ENCODE measurements at regions of chr9 and their contacts with region 1.

Region 1: GRCh38 chr9:33225319-33226149 is 14.4 kb upstream of the SPINK4 start:
- DNase-seq: peak in 3 of 5 donors; percentile 50 to 52 (median 51)
- ATAC-seq: peak in 2 of 4 donors; percentile 43 to 54
- H3K4me3 ChIP-seq: no peak overlapping the region
- H3K27ac ChIP-seq: peak overlapping the region in 1 of 12 donors; percentile 42
- H3K4me1 ChIP-seq: peaks cover 0 to 30% (median 3%) of the 10 kb centered on the region in 12 donors
- H3K27me3 ChIP-seq: no peaks in the 10 kb centered on the region
- CTCF ChIP-seq: peak; percentile 66 to 87 (median 82)
- POLR2A ChIP-seq: no peak

Region 2: DNA sequence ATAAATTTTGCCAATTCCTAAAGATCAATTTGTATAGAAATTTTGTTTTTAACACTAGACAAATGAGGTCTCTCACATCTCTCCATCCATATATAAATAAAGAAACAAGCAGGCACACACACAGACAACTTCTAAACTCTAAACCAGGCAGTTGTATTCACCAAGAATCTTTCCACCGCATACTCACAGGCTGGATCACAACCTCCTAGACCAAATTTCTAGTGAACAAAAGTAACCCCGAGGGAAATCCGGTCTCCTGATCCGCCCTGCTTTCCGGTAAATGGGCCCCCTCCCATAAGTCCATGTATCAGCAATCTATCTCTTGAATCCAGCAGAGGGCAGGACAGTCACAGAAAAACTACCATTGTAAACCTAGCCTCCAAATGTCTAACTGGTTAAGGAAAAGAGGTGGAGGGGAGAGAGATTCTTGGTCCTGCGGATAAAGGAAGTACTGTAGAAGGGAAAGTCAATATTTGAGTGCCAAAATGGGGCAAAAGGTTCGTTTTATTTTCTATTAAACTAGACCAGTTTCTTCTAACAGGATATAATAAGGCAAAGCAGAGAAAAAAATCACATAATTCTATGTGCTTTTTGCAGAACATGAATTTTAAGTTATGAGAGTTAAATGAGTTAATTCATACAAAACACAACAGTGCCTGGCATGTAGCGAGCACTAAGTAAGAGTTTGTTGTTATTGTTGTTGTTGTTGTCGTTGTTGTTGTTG is 144.2 kb before region 1 on chr9:
- intact Hi-C with region 1: loop called (anchors 1 to 2 kb)
- DNase-seq: peak in 4 of 5 donors; percentile 58 to 75 (median 64)
- ATAC-seq: peak in 3 of 4 donors; percentile 62 to 68 (median 62)
- H3K4me3 ChIP-seq: peak overlapping the region in 2 of 12 donors; percentile 11 to 37
- H3K27ac ChIP-seq: peak overlapping the region in 9 of 12 donors; percentile 9 to 81 (median 44)
- H3K4me1 ChIP-seq: peaks cover 0 to 29% (median 7%) of the 10 kb centered on the region in 12 donors
- H3K27me3 ChIP-seq: no peaks in the 10 kb centered on the region
- CTCF ChIP-seq: peak; percentile 60 to 85 (median 78)
- POLR2A ChIP-seq: no peak

Region 3: DNA sequence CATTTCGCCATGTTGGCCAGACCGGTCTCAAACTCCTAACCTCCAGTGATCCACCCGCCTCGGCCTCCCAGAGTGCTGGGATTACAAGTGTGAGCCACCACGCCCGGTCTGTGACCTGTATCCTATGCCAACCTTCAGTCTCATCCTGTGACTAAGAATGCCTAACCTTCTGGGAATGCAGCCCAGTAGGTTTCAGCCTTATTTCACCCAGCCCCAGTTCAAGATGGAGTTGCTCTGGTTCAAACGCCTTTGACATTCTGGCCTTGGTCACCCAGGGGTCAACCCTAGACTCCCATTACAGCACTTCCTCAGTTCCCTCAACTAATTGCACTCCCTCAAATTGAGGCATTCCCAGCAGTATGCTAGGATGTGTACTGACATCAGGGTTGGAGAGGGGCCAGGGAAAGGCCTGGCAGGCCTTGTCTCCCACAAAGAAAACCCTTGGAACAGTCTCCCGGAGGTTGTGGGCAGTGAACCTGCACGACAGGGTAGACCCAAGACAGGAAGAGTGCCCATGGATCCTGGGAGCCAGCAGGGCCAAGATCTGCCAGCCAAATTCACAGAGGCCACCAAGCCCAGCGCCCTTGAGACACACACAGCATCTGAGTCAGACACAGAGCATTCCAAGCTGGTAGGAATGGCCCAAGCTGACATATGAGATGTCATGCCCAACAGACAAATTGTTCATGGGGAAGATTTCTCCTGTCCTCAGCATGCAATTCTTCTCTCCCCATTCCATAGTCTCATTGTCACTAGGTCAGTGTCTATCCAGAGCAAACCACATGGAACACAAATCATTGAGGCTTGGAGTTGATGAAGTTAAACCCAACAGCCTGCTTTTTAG is 124.2 kb before region 1 on chr9:
- intact Hi-C with region 1: loop called in 2 of 10 experiments (anchors 5 kb)
- DNase-seq: no peak
- ATAC-seq: peak in 3 of 4 donors; percentile 21 to 58 (median 55)
- H3K4me3 ChIP-seq: no peak overlapping the region
- H3K27ac ChIP-seq: peak overlapping the region in 5 of 12 donors; percentile 8 to 27 (median 18)
- H3K4me1 ChIP-seq: peaks cover 0 to 38% (median 19%) of the 10 kb centered on the region in 12 donors
- H3K27me3 ChIP-seq: no peaks in the 10 kb centered on the region
- CTCF ChIP-seq: no peak
- POLR2A ChIP-seq: no peak

Region 4: GRCh38 chr9:33130508-33130911 is 95.0 kb before region 1 on chr9:
- intact Hi-C with region 1: loop called in 1 of 10 experiments (anchors 5 kb)
- DNase-seq: no peak
- ATAC-seq: peak in 3 of 4 donors; percentile 8 to 46 (median 41)
- H3K4me3 ChIP-seq: no peak overlapping the region
- H3K27ac ChIP-seq: peak overlapping the region in 7 of 12 donors; percentile 20 to 45 (median 43)
- H3K4me1 ChIP-seq: peaks cover 22 to 87% (median 72%) of the 10 kb centered on the region in 12 donors
- H3K27me3 ChIP-seq: no peaks in the 10 kb centered on the region
- CTCF ChIP-seq: no peak
- POLR2A ChIP-seq: no peak

Region 5: GRCh38 chr9:33187519-33188218 is 37.9 kb before region 1 on chr9:
- intact Hi-C with region 1: loop called in 2 of 10 experiments (anchors 5 kb)
- DNase-seq: peak; percentile 61 to 85 (median 71)
- ATAC-seq: peak; percentile 73 to 90 (median 87)
- H3K4me3 ChIP-seq: no peak overlapping the region
- H3K27ac ChIP-seq: peak overlapping the region in 11 of 12 donors; percentile 45 to 86 (median 78)
- H3K4me1 ChIP-seq: peaks cover 0 to 55% (median 29%) of the 10 kb centered on the region in 12 donors
- H3K27me3 ChIP-seq: no peaks in the 10 kb centered on the region
- CTCF ChIP-seq: no peak
- POLR2A ChIP-seq: no peak

Region 6: DNA sequence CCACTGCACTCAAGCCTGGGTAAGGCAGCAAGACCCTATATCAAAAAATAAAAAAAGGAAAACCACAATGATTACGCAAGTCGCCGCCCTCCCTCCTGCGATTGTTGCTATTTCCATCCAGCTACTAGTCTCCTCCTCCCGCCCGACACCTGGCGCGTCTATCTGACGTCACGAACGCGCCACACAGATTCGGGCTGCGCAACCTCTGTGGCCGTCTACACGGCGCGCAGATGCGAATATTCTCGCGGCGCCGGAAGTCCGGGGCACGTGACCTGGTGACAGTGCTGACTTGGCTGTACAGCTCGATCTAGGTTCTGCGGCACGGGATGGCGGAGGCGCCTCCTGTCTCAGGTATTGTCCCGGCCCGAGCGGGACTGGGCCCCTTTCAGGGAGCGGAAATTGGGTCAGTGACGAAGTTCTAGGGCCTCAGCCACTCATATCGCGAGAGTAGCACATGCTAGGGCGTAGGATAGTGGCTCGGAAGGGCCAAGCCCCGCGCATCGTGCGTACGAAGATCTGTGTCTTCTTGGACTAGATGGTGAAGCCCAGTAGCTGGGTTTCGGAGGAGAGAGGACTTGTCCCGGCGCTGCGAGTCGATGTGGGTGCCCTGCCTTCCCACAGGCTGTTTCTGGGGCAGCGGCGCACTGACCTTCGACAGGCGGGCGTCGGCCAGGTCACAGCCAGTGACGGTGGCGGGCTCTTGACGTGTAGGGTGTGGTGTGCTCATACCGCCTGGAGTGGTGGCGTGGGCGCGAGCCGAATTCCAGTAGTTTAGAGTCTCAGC is 64.9 kb after region 1 on chr9 and contains the start of gene NFX1:
- intact Hi-C with region 1: no loop called
- DNase-seq: peak; percentile 98 to 99 (median 98)
- ATAC-seq: peak; percentile 91 to 96 (median 94)
- H3K4me3 ChIP-seq: peak within 1 kb of the TSS; percentile 56 to 94 (median 78)
- H3K27ac ChIP-seq: peak within 1 kb of the TSS; percentile 94 to 100 (median 98)
- H3K4me1 ChIP-seq: peaks cover 9 to 58% (median 34%) of the 10 kb centered on the region in 12 donors
- H3K27me3 ChIP-seq: no peaks in the 10 kb centered on the region
- CTCF ChIP-seq: no peak
- POLR2A ChIP-seq: peak; percentile 36 to 90
- total RNA-seq, gene NFX1: 25.4 to 42.0 (median 36.1) TPM